A549 (cell line): ENCODE measurements at regions of chr2 and their contacts with region 1.

Region 1: GRCh38 chr2:145043399-145043834 is 523.5 kb upstream of the ZEB2 start:
- DNase-seq: peak in 1 of 2 experiments; percentile 30
- ATAC-seq: peak in 1 of 2 experiments; percentile 68; a peak in 3 of 6 replicates
- H3K4me3 ChIP-seq: no peak overlapping the region
- H3K27ac ChIP-seq: 0 out of 6 replicates have a peak overlapping the region, but pooled peaks of 1 of the 2 experiments have one; percentile 25
- H3K4me1 ChIP-seq: peaks cover 16% of the 10 kb centered on the region
- CTCF ChIP-seq: 0 out of 3 replicates have a peak, but pooled peaks have one; percentile 9
- EP300 ChIP-seq: no peak
- POLR2A ChIP-seq: no peak
- RAD21 ChIP-seq: peak; percentile 33 to 38; a peak in 3 of 5 replicates

Region 2: GRCh38 chr2:144812288-144812687 is 231.1 kb before region 1 on chr2:
- CTCF ChIA-PET with region 1: no interaction called
- POLR2A ChIA-PET with region 1: no interaction called
- DNase-seq: no peak
- ATAC-seq: no peak
- H3K4me3 ChIP-seq: no peak overlapping the region
- H3K27ac ChIP-seq: no peak overlapping the region
- H3K4me1 ChIP-seq: no peaks in the 10 kb centered on the region
- CTCF ChIP-seq: no peak
- EP300 ChIP-seq: no peak
- POLR2A ChIP-seq: no peak
- RAD21 ChIP-seq: no peak

Region 3: GRCh38 chr2:144924827-144925226 is 118.6 kb before region 1 on chr2:
- CTCF ChIA-PET with region 1: no interaction called
- POLR2A ChIA-PET with region 1: interaction called, 10 read pairs
- DNase-seq: no peak
- ATAC-seq: no peak
- H3K4me3 ChIP-seq: no peak overlapping the region
- H3K27ac ChIP-seq: no peak overlapping the region
- H3K4me1 ChIP-seq: no peaks in the 10 kb centered on the region
- CTCF ChIP-seq: no peak
- EP300 ChIP-seq: no peak
- POLR2A ChIP-seq: no peak
- RAD21 ChIP-seq: no peak